ENCODE measurements at regions of chr10 and their contacts with region 1.

Region 1: GRCh38 chr10:30639946-30640786 is 10.6 kb upstream of the LYZL2 start:
- DNase-seq: no peak
- H3K4me3 Mint-ChIP-seq: no peak overlapping the region
- H3K27ac Mint-ChIP-seq: no peak overlapping the region
- H3K4me1 Mint-ChIP-seq: peaks cover 10% of the 10 kb centered on the region
- H3K27me3 Mint-ChIP-seq: peaks cover 42% of the 10 kb centered on the region

Region 2: GRCh38 chr10:29881336-29881771 is 758.8 kb before region 1 on chr10:
- CTCF ChIA-PET with region 1: no interaction called
- POLR2A ChIA-PET with region 1: no interaction called
- intact Hi-C with region 1: no loop called
- DNase-seq: no peak
- H3K4me3 Mint-ChIP-seq: no peak overlapping the region
- H3K27ac Mint-ChIP-seq: no peak overlapping the region
- H3K4me1 Mint-ChIP-seq: no peaks in the 10 kb centered on the region
- H3K27me3 Mint-ChIP-seq: peaks cover 23% of the 10 kb centered on the region

Region 3: DNA sequence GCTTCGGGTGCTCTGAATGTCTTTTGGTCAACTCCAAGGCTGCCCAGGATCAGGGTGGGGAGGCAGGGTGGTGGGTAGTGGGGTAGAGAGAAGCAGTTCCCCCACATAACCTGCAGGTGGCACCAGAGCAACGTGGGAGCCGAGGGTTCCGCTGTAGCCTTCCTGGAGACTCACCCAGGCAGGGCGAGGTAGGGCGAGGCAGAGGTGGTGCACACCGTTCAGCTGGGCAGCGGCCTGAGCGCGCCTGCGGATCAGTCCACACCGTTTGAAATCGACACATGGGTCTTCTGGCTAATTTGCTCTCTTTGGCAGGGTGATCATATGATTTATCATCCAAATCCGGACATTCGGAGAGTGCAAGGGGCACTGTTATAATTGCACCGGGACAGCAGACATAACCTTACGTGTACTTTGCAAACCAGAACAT is 247.6 kb before region 1 on chr10:
- CTCF ChIA-PET with region 1: interaction called, 10 read pairs
- POLR2A ChIA-PET with region 1: no interaction called
- intact Hi-C with region 1: no loop called
- DNase-seq: peak; percentile 84
- H3K4me3 Mint-ChIP-seq: peak overlapping the region; percentile 24
- H3K27ac Mint-ChIP-seq: no peak overlapping the region
- H3K4me1 Mint-ChIP-seq: peaks cover 2% of the 10 kb centered on the region
- H3K27me3 Mint-ChIP-seq: peaks cover 18% of the 10 kb centered on the region

Region 4: DNA sequence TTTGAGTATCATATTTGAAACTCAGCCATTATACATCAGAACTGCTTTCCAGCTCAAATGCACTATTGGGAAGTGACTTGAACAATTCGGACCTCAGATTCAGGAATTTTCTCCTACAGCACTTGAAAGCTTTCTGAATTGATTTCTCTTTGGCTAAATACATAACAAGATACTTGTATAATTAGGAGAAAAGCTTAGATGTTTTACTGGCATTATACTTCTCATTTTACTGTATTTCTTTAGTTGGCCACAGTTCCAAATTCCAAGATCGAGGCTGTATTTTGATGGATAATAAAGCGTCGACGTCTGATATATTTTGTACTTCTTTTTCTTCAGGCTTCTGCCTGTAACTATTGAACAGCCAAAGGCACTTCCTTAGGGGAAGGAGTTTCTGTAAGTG is 16.1 kb after region 1 on chr10:
- CTCF ChIA-PET with region 1: interaction called, 14 read pairs
- POLR2A ChIA-PET with region 1: no interaction called
- intact Hi-C with region 1: no loop called
- DNase-seq: no peak
- H3K4me3 Mint-ChIP-seq: no peak overlapping the region
- H3K27ac Mint-ChIP-seq: no peak overlapping the region
- H3K4me1 Mint-ChIP-seq: peaks cover 4% of the 10 kb centered on the region
- H3K27me3 Mint-ChIP-seq: peaks cover 35% of the 10 kb centered on the region

Region 5: GRCh38 chr10:30671026-30671616 is 31.0 kb after region 1 on chr10:
- CTCF ChIA-PET with region 1: interaction called, 62 read pairs
- POLR2A ChIA-PET with region 1: no interaction called
- intact Hi-C with region 1: no loop called
- DNase-seq: no peak
- H3K4me3 Mint-ChIP-seq: peak overlapping the region; percentile 49
- H3K27ac Mint-ChIP-seq: peak overlapping the region; percentile 52
- H3K4me1 Mint-ChIP-seq: peaks cover 31% of the 10 kb centered on the region
- H3K27me3 Mint-ChIP-seq: peaks cover 17% of the 10 kb centered on the region

Region 6: GRCh38 chr10:30709229-30709628 is 69.1 kb after region 1 on chr10:
- CTCF ChIA-PET with region 1: interaction called, 10 read pairs
- POLR2A ChIA-PET with region 1: no interaction called
- intact Hi-C with region 1: no loop called
- DNase-seq: peak; percentile 30
- H3K4me3 Mint-ChIP-seq: no peak overlapping the region
- H3K27ac Mint-ChIP-seq: no peak overlapping the region
- H3K4me1 Mint-ChIP-seq: peaks cover 36% of the 10 kb centered on the region
- H3K27me3 Mint-ChIP-seq: no peaks in the 10 kb centered on the region

Measured in activated CD4-positive, alpha-beta memory T cell treated with anti-CD3 and anti-CD28 coated beads for 36 hours (primary cell).